ENCODE measurements at regions of chr17 and their contacts with region 1.

Region 1: GRCh38 chr17:45098869-45099616 is 33.3 kb downstream of the PLCD3 start:
- DNase-seq: peak; percentile 93
- H3K4me3 ChIP-seq: no peak overlapping the region; a peak in 1 of 4 replicates
- H3K27ac ChIP-seq: peak overlapping the region in 1 of 2 experiments; percentile 19; a peak in 1 of 4 replicates
- H3K4me1 ChIP-seq: peaks cover 0 to under 1% of the 10 kb centered on the region in 2 experiments; a peak in 1 of 4 replicates
- H3K27me3 ChIP-seq: no peaks in the 10 kb centered on the region
- CTCF ChIP-seq: peak; percentile 91
- EP300 ChIP-seq: no peak
- RAD21 ChIP-seq: peak; percentile 83

Region 2: DNA sequence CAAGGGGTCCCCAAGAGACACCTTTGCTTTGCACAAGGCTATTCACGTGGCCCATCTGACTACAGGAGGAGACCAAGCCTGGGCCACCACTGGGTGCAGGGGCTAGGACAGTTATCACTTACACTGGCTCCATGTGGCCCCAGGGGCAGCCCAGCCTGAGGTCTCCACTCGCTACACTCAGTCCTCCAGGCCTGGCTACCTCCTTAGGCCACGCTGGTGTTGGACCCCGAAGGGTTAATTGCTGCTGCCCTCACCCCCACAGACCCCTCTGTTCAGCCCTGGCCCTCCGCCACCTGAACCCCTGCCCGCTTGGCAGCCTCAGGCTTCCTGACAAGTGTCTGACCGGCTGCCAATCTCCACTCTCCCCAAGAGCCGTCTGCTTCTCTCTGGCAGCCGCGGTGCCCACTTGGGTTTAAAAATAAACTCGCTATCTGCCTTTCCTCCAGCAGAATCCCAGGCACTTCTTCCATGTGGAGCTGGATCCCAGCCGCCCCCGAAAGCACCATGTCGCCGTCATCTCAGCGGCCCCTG is 312.4 kb before region 1 on chr17:
- CTCF ChIA-PET with region 1: no interaction called
- POLR2A ChIA-PET with region 1: no interaction called
- DNase-seq: no peak
- H3K4me3 ChIP-seq: no peak overlapping the region
- H3K27ac ChIP-seq: no peak overlapping the region
- H3K4me1 ChIP-seq: peaks cover 0 to 11% of the 10 kb centered on the region in 2 experiments; a peak in 1 of 4 replicates
- H3K27me3 ChIP-seq: no peaks in the 10 kb centered on the region
- CTCF ChIP-seq: no peak
- EP300 ChIP-seq: no peak
- RAD21 ChIP-seq: no peak

Region 3: DNA sequence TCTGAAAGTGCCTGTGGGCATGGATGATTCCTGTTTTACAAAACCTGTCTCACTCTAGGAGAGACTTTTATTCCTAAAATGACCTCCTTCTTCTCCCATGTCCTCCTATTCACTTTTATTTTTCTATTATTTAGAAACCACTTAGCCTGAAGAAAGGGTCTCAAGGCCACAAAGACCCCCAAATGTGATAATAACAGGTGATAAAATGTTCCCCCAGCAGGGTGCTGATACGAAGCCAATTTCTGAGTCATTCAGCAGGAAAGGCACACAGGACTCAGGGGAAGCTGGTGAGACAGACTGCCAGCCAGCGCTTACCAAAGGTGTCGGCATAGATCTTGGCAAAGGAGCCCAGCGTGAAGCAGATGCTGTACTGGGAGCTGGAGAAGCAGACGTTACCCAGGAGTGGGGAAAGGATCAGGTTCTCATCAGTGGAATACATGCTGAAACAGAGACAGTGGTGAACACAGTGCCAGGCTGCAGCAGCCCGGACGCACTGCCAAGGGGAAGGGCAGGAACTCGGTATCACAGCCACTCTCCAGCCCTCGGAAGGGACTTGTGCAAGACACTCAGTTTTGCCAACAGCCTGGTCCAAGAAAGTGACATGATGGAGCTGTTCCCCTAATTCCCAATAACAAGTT is 226.8 kb before region 1 on chr17:
- CTCF ChIA-PET with region 1: no interaction called
- POLR2A ChIA-PET with region 1: no interaction called
- DNase-seq: no peak
- H3K4me3 ChIP-seq: no peak overlapping the region
- H3K27ac ChIP-seq: no peak overlapping the region
- H3K4me1 ChIP-seq: no peaks in the 10 kb centered on the region
- H3K27me3 ChIP-seq: no peaks in the 10 kb centered on the region
- CTCF ChIP-seq: no peak
- EP300 ChIP-seq: no peak
- RAD21 ChIP-seq: no peak

Region 4: GRCh38 chr17:44911133-44912001 is 187.7 kb before region 1 on chr17:
- CTCF ChIA-PET with region 1: interaction called, 10 read pairs
- POLR2A ChIA-PET with region 1: no interaction called
- DNase-seq: peak; percentile 77
- H3K4me3 ChIP-seq: no peak overlapping the region
- H3K27ac ChIP-seq: peak overlapping the region in 1 of 2 experiments; percentile 93; a peak in 1 of 4 replicates
- H3K4me1 ChIP-seq: peaks cover 6 to 25% of the 10 kb centered on the region in 2 experiments; a peak in 3 of 4 replicates
- H3K27me3 ChIP-seq: no peaks in the 10 kb centered on the region
- CTCF ChIP-seq: peak; percentile 50
- EP300 ChIP-seq: no peak
- RAD21 ChIP-seq: 0 out of 2 replicates have a peak, but pooled peaks have one; percentile 30

Region 5: DNA sequence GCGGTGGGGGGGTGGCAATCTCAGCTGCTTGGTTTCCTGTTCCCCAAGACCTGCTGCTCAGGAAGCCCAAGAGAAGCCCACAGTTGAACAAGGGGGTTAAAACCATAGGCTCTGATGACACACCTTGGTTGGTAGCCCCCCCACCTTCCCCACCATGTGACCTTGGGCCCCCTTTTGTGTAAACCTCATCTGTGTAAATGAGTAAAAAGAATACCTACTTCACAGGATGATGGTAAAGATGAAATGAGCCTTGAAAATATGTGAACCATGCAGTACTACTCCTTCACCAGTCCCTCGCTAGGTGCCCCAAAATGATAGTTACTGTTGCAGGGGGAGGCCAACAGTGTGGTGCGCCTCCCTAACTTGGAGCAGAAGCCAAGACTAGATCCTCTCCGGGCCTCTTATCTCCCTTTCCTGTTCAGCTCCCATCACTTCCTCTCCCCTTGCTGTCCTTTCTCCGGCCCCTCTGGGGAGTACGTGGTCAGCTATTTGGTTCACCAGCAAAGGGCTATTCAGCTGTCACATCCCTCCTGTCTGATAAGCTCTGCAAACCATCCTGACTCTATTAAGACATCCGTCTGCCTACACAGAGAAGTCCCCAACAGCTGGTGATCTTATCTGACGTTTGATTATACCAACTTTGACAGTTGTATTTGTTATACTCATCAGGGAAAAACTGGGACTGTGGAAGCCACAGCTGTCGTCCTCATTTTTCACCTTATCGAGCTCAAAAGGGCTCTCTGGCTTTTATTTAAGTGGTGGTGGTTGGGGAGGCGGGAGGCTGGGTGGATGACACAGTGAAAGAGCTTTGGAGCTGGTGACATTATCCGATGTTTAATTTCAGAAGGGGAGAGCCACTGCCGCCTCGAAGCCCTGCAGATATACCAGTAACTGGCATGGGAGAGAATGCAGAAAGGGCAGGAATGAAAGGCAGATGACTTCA is 67.5 kb before region 1 on chr17:
- CTCF ChIA-PET with region 1: interaction called, 18 read pairs
- POLR2A ChIA-PET with region 1: no interaction called
- DNase-seq: peak; percentile 90
- H3K4me3 ChIP-seq: no peak overlapping the region
- H3K27ac ChIP-seq: peak overlapping the region; percentile 42 to 96; a peak in 3 of 4 replicates
- H3K4me1 ChIP-seq: peaks cover 0 to 39% of the 10 kb centered on the region in 2 experiments; a peak in 2 of 4 replicates
- H3K27me3 ChIP-seq: no peaks in the 10 kb centered on the region
- CTCF ChIP-seq: no peak
- EP300 ChIP-seq: peak in 1 of 2 experiments; percentile 96; a peak in 2 of 4 replicates
- RAD21 ChIP-seq: peak; percentile 44; the same call in 1 of the 2 replicates

Region 6: GRCh38 chr17:45081042-45081703 is 17.9 kb before region 1 on chr17:
- CTCF ChIA-PET with region 1: interaction called, 25 read pairs
- POLR2A ChIA-PET with region 1: no interaction called
- DNase-seq: no peak
- H3K4me3 ChIP-seq: no peak overlapping the region
- H3K27ac ChIP-seq: peak overlapping the region; percentile 22 to 23; a peak in 3 of 4 replicates
- H3K4me1 ChIP-seq: no peaks in the 10 kb centered on the region; a peak in 2 of 4 replicates
- H3K27me3 ChIP-seq: no peaks in the 10 kb centered on the region
- CTCF ChIP-seq: no peak
- EP300 ChIP-seq: no peak
- RAD21 ChIP-seq: no peak

Region 7: GRCh38 chr17:45115871-45116724 is 17.1 kb after region 1 on chr17:
- CTCF ChIA-PET with region 1: interaction called, 34 read pairs
- POLR2A ChIA-PET with region 1: no interaction called
- DNase-seq: no peak
- H3K4me3 ChIP-seq: no peak overlapping the region
- H3K27ac ChIP-seq: no peak overlapping the region; a peak in 1 of 4 replicates
- H3K4me1 ChIP-seq: peaks cover 0 to 29% of the 10 kb centered on the region in 2 experiments; a peak in 1 of 4 replicates
- H3K27me3 ChIP-seq: no peaks in the 10 kb centered on the region
- CTCF ChIP-seq: no peak
- EP300 ChIP-seq: no peak
- RAD21 ChIP-seq: no peak